Activated CD8-positive, alpha-beta T cell treated with anti-CD3 and anti-CD28 coated beads for 36 hours (primary cell): ENCODE measurements at regions of chr2 and their contacts with region 1.

Region 1: GRCh38 chr2:205660521-205661124 is 21.7 kb upstream of the NRP2 start:
- DNase-seq: peak; percentile 79
- ATAC-seq: peak; percentile 87
- H3K4me3 Mint-ChIP-seq: peak overlapping the region; percentile 37
- H3K27ac Mint-ChIP-seq: peak overlapping the region; percentile 83
- H3K4me1 Mint-ChIP-seq: peaks cover 22% of the 10 kb centered on the region
- H3K27me3 Mint-ChIP-seq: no peaks in the 10 kb centered on the region
- CTCF ChIP-seq: no peak

Region 2: GRCh38 chr2:205612636-205613035 is 48.0 kb before region 1 on chr2:
- CTCF ChIA-PET with region 1: interaction called, 3 read pairs
- POLR2A ChIA-PET with region 1: no interaction called
- intact Hi-C with region 1: loop called (anchors 2 kb)
- DNase-seq: peak; percentile 85
- ATAC-seq: peak; percentile 90
- H3K4me3 Mint-ChIP-seq: no peak overlapping the region
- H3K27ac Mint-ChIP-seq: peak overlapping the region; percentile 71
- H3K4me1 Mint-ChIP-seq: peaks cover 33% of the 10 kb centered on the region
- H3K27me3 Mint-ChIP-seq: peaks cover 15% of the 10 kb centered on the region
- CTCF ChIP-seq: no peak

Region 3: GRCh38 chr2:205800773-205801172 is 140.2 kb after region 1 on chr2:
- CTCF ChIA-PET with region 1: no interaction called
- POLR2A ChIA-PET with region 1: no interaction called
- intact Hi-C with region 1: no loop called
- DNase-seq: no peak
- ATAC-seq: no peak
- H3K4me3 Mint-ChIP-seq: no peak overlapping the region
- H3K27ac Mint-ChIP-seq: no peak overlapping the region
- H3K4me1 Mint-ChIP-seq: no peaks in the 10 kb centered on the region
- H3K27me3 Mint-ChIP-seq: no peaks in the 10 kb centered on the region
- CTCF ChIP-seq: no peak